Activated T-helper 2 cell treated with anti-CD3 and anti-CD28 coated beads, Interferon-gamma antibody, Interleukin-2, Interleukin-4, amounts not matched to agents 10 μg/mL and 5 μg/mL and 100 μg/mL, durations not matched to agents 14 hours and 24 hours and 36 hours (primary cell): ENCODE measurements at regions of chr2 and their contacts with region 1.

Region 1: DNA sequence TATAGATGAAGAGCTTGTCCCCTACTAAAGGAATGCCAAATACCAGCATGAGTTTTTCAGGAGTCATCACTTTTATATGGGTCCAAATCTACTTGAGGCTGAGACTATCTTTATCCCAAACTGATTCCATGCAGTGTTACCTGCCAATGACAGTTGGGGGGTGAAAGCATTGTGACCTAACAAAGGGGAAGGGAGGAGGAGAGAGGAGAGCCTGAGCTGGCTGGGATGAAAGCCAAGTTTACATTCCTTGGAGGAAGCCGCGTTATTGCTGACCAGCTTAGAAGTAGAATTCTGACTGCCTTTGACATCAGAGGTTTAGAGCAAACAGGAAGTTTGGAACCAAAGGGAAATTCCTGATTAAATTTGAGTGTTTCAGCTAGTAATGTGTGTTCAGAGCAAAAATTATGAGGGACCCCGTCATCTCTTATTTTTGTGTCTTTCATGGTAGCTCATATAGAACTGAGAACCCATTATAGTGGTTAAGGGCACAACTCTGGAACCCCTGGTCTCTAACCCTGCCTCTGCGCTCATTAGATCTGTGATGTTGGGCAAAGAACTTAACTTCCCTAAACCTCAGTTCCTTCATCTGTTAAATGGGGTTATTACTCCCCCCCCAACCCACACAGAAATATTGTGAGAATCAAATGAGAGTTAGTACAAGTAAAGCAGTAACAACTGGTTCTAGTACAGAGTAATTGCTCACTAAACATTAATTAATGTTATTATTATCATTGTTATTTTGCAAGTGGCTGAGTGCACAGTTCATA is 199.3 kb upstream of the EPAS1 start:
- DNase-seq: no peak
- H3K4me3 Mint-ChIP-seq: no peak overlapping the region
- H3K27ac Mint-ChIP-seq: no peak overlapping the region
- H3K4me1 Mint-ChIP-seq: peaks cover 33% of the 10 kb centered on the region
- H3K27me3 Mint-ChIP-seq: no peaks in the 10 kb centered on the region

Region 2: DNA sequence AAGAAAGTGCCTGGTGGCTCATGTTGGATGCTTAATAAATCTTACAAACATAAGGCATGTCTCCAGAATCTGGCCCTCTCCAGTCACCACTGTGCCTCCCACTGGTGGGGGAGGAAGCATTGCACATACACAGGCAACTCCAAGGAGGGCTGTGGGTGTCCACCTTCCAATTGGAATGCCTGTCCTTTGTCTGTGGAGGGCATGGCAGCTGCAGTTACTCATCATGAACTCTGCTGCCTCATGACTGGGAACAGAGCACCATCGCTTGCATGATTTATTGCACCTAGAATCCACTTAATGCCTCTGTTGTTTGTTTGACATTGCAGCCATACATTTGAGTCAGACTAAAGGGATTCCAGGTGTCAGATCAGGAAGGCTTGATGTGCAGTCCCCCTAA is 167.5 kb before region 1 on chr2:
- intact Hi-C with region 1: no loop called
- DNase-seq: no peak
- H3K4me3 Mint-ChIP-seq: no peak overlapping the region
- H3K27ac Mint-ChIP-seq: no peak overlapping the region
- H3K4me1 Mint-ChIP-seq: peaks cover 4% of the 10 kb centered on the region
- H3K27me3 Mint-ChIP-seq: no peaks in the 10 kb centered on the region

Region 3: DNA sequence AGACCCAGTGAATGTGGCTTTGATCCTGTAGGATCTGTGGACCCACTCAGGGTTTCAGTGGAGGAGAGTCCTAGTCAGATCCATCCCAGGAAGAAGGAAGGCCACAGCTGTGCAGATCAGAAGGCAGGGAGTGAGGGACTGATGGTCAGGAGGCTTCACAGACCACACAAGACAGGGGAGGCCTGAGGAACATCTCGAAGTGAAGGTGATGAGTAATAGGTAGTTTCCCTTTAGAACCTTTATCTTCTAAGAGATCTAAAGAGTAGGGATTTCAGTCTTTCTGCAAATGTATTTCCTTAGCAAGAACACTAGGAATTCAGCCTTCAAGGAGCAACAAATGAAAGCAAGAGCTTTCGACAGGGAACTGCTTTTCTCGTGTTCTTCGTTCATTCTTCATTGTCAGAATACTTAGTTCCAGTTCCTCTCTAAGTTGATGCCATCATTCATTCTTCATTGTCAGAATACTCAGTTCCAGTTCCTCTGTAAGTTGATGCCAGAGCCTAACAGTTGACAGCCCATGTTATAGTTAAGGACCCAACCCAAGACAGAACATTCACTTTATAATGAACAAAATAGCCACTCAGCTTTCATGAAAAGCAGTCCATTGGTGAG is 49.1 kb after region 1 on chr2:
- intact Hi-C with region 1: loop called (anchors 2 kb)
- DNase-seq: no peak
- H3K4me3 Mint-ChIP-seq: no peak overlapping the region
- H3K27ac Mint-ChIP-seq: no peak overlapping the region
- H3K4me1 Mint-ChIP-seq: peaks cover 41% of the 10 kb centered on the region
- H3K27me3 Mint-ChIP-seq: no peaks in the 10 kb centered on the region

Region 4: GRCh38 chr2:46236005-46236875 is 138.3 kb after region 1 on chr2:
- intact Hi-C with region 1: no loop called
- DNase-seq: no peak
- H3K4me3 Mint-ChIP-seq: no peak overlapping the region
- H3K27ac Mint-ChIP-seq: no peak overlapping the region
- H3K4me1 Mint-ChIP-seq: peaks cover 49% of the 10 kb centered on the region
- H3K27me3 Mint-ChIP-seq: peaks cover 5% of the 10 kb centered on the region

Region 5: GRCh38 chr2:46275973-46276372 is 178.1 kb after region 1 on chr2:
- intact Hi-C with region 1: no loop called
- DNase-seq: no peak
- H3K4me3 Mint-ChIP-seq: no peak overlapping the region
- H3K27ac Mint-ChIP-seq: no peak overlapping the region
- H3K4me1 Mint-ChIP-seq: peaks cover 5% of the 10 kb centered on the region
- H3K27me3 Mint-ChIP-seq: peaks cover 27% of the 10 kb centered on the region